CD4-positive, alpha-beta T cell (primary cell): ENCODE measurements at regions of chr16 and their contacts with region 1.

Region 1: GRCh38 chr16:16127469-16128116 is 95.7 kb downstream of the ABCC6 start:
- DNase-seq: peak; percentile 34 to 79 (median 62)
- ATAC-seq: peak; percentile 93
- H3K4me3 ChIP-seq: no peak overlapping the region
- H3K4me3 Mint-ChIP-seq: no peak overlapping the region
- H3K27ac ChIP-seq: no peak overlapping the region
- H3K27ac Mint-ChIP-seq: peak overlapping the region; percentile 8
- H3K4me1 ChIP-seq: no peaks in the 10 kb centered on the region
- H3K4me1 Mint-ChIP-seq: peaks cover 4% of the 10 kb centered on the region
- H3K27me3 ChIP-seq: no peaks in the 10 kb centered on the region
- H3K27me3 Mint-ChIP-seq: no peaks in the 10 kb centered on the region
- CTCF ChIP-seq: peak; percentile 82

Region 2: GRCh38 chr16:15427648-15428239 is 699.8 kb before region 1 on chr16:
- CTCF ChIA-PET with region 1: no interaction called
- POLR2A ChIA-PET with region 1: no interaction called
- intact Hi-C with region 1: loop called in 1 of 2 experiments (anchors 2 kb)
- DNase-seq: peak; percentile 33 to 71 (median 54)
- ATAC-seq: no peak
- H3K4me3 ChIP-seq: no peak overlapping the region
- H3K4me3 Mint-ChIP-seq: no peak overlapping the region
- H3K27ac ChIP-seq: no peak overlapping the region
- H3K27ac Mint-ChIP-seq: no peak overlapping the region
- H3K4me1 ChIP-seq: no peaks in the 10 kb centered on the region
- H3K4me1 Mint-ChIP-seq: no peaks in the 10 kb centered on the region
- H3K27me3 ChIP-seq: no peaks in the 10 kb centered on the region
- H3K27me3 Mint-ChIP-seq: peaks cover 9% of the 10 kb centered on the region
- CTCF ChIP-seq: peak; percentile 60

Region 3: GRCh38 chr16:15704545-15704987 is 423.0 kb before region 1 on chr16:
- CTCF ChIA-PET with region 1: no interaction called
- POLR2A ChIA-PET with region 1: no interaction called
- intact Hi-C with region 1: loop called (anchors 2 to 5 kb)
- DNase-seq: peak; percentile 58 to 84 (median 70)
- ATAC-seq: peak; percentile 76
- H3K4me3 ChIP-seq: no peak overlapping the region
- H3K4me3 Mint-ChIP-seq: no peak overlapping the region
- H3K27ac ChIP-seq: no peak overlapping the region
- H3K27ac Mint-ChIP-seq: peak overlapping the region; percentile 72
- H3K4me1 ChIP-seq: peaks cover 7% of the 10 kb centered on the region
- H3K4me1 Mint-ChIP-seq: peaks cover 18% of the 10 kb centered on the region
- H3K27me3 ChIP-seq: no peaks in the 10 kb centered on the region
- H3K27me3 Mint-ChIP-seq: no peaks in the 10 kb centered on the region
- CTCF ChIP-seq: peak; percentile 88

Region 4: GRCh38 chr16:15765880-15766279 is 361.7 kb before region 1 on chr16:
- CTCF ChIA-PET with region 1: no interaction called
- POLR2A ChIA-PET with region 1: no interaction called
- intact Hi-C with region 1: loop called (anchors 1 kb)
- DNase-seq: peak in 6 of 14 experiments; percentile 5 to 57 (median 30)
- ATAC-seq: peak; percentile 57
- H3K4me3 ChIP-seq: no peak overlapping the region
- H3K4me3 Mint-ChIP-seq: no peak overlapping the region
- H3K27ac ChIP-seq: no peak overlapping the region
- H3K27ac Mint-ChIP-seq: no peak overlapping the region
- H3K4me1 ChIP-seq: no peaks in the 10 kb centered on the region
- H3K4me1 Mint-ChIP-seq: no peaks in the 10 kb centered on the region
- H3K27me3 ChIP-seq: peaks cover 7 to 8% of the 10 kb centered on the region in 2 experiments
- H3K27me3 Mint-ChIP-seq: peaks cover 43% of the 10 kb centered on the region
- CTCF ChIP-seq: peak; percentile 54

Region 5: DNA sequence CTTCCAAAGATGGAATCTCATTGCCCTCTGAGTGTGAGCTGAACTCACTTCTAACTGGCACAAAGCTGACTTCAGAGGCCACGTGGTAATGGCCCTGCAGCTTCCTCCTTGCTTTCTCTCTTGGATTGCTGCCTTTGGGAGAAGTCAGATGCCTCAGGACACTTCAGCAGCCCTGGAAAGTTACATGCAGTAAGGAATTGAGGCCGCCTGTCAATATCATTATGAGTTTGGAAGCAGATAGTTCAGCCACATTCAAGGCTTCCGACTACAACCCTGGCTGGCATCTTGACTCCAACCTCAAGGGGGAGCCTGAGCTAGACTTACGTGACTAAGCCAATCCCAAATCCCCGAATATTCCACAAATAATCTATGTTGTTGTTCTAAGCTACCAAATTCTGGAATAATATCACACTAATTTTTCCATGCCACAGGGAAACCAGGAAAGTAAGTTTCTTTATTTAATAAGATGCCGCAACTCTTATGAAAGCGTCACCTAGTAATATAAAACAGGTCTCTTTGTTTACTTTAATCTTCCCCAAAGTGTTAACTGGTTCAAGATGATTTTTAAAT is 252.8 kb before region 1 on chr16:
- CTCF ChIA-PET with region 1: interaction called, 3 read pairs
- POLR2A ChIA-PET with region 1: no interaction called
- intact Hi-C with region 1: loop called (anchors 1 kb)
- DNase-seq: peak in 5 of 14 experiments; percentile 3 to 38 (median 34)
- ATAC-seq: no peak
- H3K4me3 ChIP-seq: no peak overlapping the region
- H3K4me3 Mint-ChIP-seq: no peak overlapping the region
- H3K27ac ChIP-seq: no peak overlapping the region
- H3K27ac Mint-ChIP-seq: no peak overlapping the region
- H3K4me1 ChIP-seq: no peaks in the 10 kb centered on the region
- H3K4me1 Mint-ChIP-seq: no peaks in the 10 kb centered on the region
- H3K27me3 ChIP-seq: no peaks in the 10 kb centered on the region
- H3K27me3 Mint-ChIP-seq: no peaks in the 10 kb centered on the region
- CTCF ChIP-seq: peak; percentile 57

Region 6: DNA sequence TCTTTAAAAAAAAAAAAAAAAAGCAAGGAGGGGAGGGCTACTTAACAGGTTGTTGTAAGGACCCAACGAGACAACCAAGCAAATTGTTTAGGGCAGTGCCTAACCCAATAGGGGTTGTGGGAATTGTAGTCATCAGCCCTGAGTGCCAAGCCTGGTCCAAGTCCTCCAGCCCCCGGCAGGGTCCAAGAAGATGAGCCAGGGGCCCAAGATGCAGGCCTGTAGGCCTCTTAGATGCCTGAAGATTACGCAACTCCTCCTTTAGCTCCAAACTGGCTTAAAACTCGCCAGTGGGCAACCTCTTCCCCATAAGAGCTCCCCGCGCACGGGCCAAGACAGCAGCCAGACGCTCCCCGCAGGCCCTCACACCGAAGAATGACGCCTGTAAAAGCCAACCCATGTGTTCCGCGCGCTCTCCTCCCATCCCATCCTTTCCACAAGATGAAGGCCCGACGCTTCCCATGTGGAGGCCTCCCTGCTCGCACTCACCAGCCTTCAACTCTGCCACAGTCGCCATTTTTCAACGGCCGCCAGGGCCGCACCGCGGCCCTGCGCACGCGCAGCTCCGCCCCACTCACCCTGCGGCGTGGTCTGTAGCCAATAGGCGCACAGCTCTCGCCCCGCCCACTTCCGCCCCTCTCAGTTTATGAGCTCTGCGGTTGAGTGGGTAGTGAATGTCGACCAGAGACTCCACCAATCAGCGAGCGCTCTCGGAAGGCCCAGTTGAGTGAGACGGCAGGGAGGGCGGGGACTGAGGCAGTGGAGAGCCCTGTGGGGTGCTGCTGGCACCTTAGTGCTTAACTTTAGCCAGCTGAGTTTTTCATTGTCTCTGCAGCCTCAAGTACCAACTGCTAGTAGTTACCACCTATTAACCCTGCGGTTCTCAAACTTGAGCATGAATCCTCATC is 239.3 kb before region 1 on chr16 and contains the start of gene CEP20:
- CTCF ChIA-PET with region 1: interaction called, 3 read pairs
- POLR2A ChIA-PET with region 1: no interaction called
- intact Hi-C with region 1: loop called in 1 of 2 experiments (anchors 5 kb)
- DNase-seq: peak; percentile 99 to 100 (median 100)
- ATAC-seq: peak; percentile 97
- H3K4me3 ChIP-seq: peak within 1 kb of the TSS; percentile 88
- H3K4me3 Mint-ChIP-seq: peak within 1 kb of the TSS; percentile 99
- H3K27ac ChIP-seq: peak within 1 kb of the TSS; percentile 74 to 77
- H3K27ac Mint-ChIP-seq: peak within 1 kb of the TSS; percentile 91
- H3K4me1 ChIP-seq: peaks cover 24% of the 10 kb centered on the region
- H3K4me1 Mint-ChIP-seq: peaks cover 30% of the 10 kb centered on the region
- H3K27me3 ChIP-seq: no peaks in the 10 kb centered on the region
- H3K27me3 Mint-ChIP-seq: no peaks in the 10 kb centered on the region
- CTCF ChIP-seq: no peak
- total RNA-seq, gene CEP20: 14.4 to 15.5 TPM

Region 7: GRCh38 chr16:16116841-16117240 is 10.8 kb before region 1 on chr16:
- CTCF ChIA-PET with region 1: no interaction called
- POLR2A ChIA-PET with region 1: no interaction called
- intact Hi-C with region 1: no loop called
- DNase-seq: no peak
- ATAC-seq: no peak
- H3K4me3 ChIP-seq: no peak overlapping the region
- H3K4me3 Mint-ChIP-seq: no peak overlapping the region
- H3K27ac ChIP-seq: no peak overlapping the region
- H3K27ac Mint-ChIP-seq: no peak overlapping the region
- H3K4me1 ChIP-seq: peaks cover 8% of the 10 kb centered on the region
- H3K4me1 Mint-ChIP-seq: no peaks in the 10 kb centered on the region
- H3K27me3 ChIP-seq: no peaks in the 10 kb centered on the region
- H3K27me3 Mint-ChIP-seq: no peaks in the 10 kb centered on the region
- CTCF ChIP-seq: no peak